ENCODE measurements at regions of chr7 and their contacts with region 1.

Region 1: GRCh38 chr7:22127835-22128527 is 182.3 kb upstream of the CDCA7L start:
- DNase-seq: no peak

Region 2: GRCh38 chr7:22156205-22156604 is 28.2 kb after region 1 on chr7:
- intact Hi-C with region 1: loop called (anchors 2 kb)
- DNase-seq: no peak

Region 3: GRCh38 chr7:22219036-22219435 is 91.1 kb after region 1 on chr7:
- intact Hi-C with region 1: loop called (anchors 5 kb)
- DNase-seq: no peak